Activated CD4-positive, alpha-beta T cell treated with anti-CD3 and anti-CD28 coated beads, Interleukin-2, amount 10 ng/mL, durations not matched to agents 7 days and 5 days (primary cell): ENCODE measurements at regions of chr14 and their contacts with region 1.

Region 1: GRCh38 chr14:22570132-22570949 is 18.7 kb downstream of the DAD1 start:
- DNase-seq: peak; percentile 94
- H3K4me3 Mint-ChIP-seq: peak overlapping the region; percentile 78
- H3K27ac Mint-ChIP-seq: peak overlapping the region; percentile 97
- H3K4me1 Mint-ChIP-seq: peaks cover 68% of the 10 kb centered on the region
- H3K27me3 Mint-ChIP-seq: no peaks in the 10 kb centered on the region

Region 2: GRCh38 chr14:21860172-21860571 is 710.2 kb before region 1 on chr14:
- CTCF ChIA-PET with region 1: interaction called, 10 read pairs
- POLR2A ChIA-PET with region 1: no interaction called
- DNase-seq: peak; percentile 63
- H3K4me3 Mint-ChIP-seq: peak overlapping the region; percentile 36
- H3K27ac Mint-ChIP-seq: peak overlapping the region; percentile 52
- H3K4me1 Mint-ChIP-seq: peaks cover 7% of the 10 kb centered on the region
- H3K27me3 Mint-ChIP-seq: peaks cover 23% of the 10 kb centered on the region

Region 3: DNA sequence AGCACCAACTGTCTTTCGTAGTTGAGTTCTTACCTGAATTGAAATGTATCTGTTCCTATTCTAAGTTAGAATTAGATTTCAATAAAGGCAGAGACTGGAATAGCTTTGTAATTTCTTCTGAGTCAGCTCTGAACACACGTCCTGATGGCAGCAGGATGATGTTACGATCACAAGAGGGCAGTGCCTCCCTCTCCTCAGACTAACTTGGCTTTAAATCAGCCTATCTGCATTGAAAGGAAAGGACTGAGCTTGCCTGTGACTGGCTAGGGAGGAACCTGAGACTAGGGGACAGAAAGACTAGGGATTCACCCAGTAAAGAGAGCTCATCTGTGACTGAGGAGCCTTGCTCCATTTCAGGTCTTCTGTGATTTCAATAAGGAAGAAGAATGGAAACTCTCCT is 573.0 kb before region 1 on chr14:
- CTCF ChIA-PET with region 1: interaction called, 14 read pairs
- POLR2A ChIA-PET with region 1: no interaction called
- DNase-seq: peak; percentile 58
- H3K4me3 Mint-ChIP-seq: peak overlapping the region; percentile 83
- H3K27ac Mint-ChIP-seq: peak overlapping the region; percentile 91
- H3K4me1 Mint-ChIP-seq: peaks cover 34% of the 10 kb centered on the region
- H3K27me3 Mint-ChIP-seq: no peaks in the 10 kb centered on the region

Region 4: DNA sequence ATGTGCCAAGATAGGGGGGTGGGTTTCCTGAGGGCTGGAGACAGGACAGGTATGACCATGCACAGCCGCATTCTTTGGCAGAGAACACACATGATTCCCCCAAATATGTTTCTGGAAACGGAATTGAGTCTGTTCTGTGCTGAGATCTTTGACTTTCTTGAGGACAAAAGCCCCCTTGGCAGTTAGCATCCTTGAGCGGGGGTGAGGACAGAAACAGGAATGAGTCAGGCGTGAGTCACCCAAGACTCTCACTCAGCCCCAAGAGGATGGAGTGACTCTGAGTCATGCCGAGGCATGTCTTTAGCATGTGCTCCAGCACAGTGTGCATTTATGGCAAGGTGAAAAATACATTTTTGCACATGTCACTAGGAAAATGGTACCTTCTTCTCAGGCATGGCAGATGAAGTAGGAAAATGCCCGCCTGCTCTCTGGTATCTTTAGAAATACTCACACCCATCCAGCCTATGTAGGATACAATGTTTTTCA is 33.4 kb before region 1 on chr14:
- CTCF ChIA-PET with region 1: interaction called, 55 read pairs
- POLR2A ChIA-PET with region 1: no interaction called
- DNase-seq: peak; percentile 80
- H3K4me3 Mint-ChIP-seq: peak overlapping the region; percentile 77
- H3K27ac Mint-ChIP-seq: peak overlapping the region; percentile 91
- H3K4me1 Mint-ChIP-seq: peaks cover 95% of the 10 kb centered on the region
- H3K27me3 Mint-ChIP-seq: no peaks in the 10 kb centered on the region

Region 5: DNA sequence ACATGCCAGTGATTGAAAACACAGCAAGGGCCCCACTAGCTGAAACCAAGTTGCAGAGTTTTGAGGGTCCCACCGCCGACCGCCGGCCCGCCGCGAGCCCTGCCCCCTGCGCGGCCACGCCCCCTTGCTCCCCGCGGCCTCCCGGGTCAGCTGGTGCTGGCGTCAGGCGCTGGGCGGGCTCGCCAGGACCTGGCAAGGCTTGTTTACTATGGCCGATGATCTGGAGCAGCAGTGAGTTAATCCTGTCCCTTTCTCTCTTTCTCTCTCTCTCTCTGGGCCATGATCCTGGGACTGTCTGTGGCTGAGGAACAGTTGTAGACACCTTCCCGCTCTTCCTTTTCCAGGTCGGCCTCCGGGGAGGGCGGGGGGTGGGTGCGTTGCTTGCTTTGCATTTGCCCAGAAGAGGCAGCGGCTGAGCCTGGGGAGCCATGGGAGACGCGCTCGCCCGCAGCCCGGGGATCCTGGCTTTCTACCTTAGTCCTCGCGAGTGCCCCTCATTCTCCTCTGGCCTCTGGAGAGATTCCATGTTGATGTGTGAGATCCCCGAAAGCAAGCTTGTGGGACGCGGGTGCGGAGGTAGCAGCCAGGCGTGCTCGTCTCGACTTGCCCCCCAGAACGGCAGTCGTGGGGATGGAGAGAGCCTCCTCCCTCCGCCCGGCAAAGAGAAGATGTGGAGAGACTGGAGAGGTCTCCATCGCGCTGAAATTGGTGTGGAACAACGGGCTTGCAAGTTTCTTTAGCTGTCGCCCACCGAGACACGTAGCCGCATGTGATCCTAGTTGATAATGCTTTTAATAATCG is 28.0 kb after region 1 on chr14 and contains the start of gene ABHD4:
- CTCF ChIA-PET with region 1: interaction called, 28 read pairs
- POLR2A ChIA-PET with region 1: no interaction called
- DNase-seq: peak; percentile 65
- H3K4me3 Mint-ChIP-seq: peak within 1 kb of the TSS; percentile 89
- H3K27ac Mint-ChIP-seq: peak within 1 kb of the TSS; percentile 86
- H3K4me1 Mint-ChIP-seq: peaks cover 39% of the 10 kb centered on the region
- H3K27me3 Mint-ChIP-seq: peaks cover 4% of the 10 kb centered on the region
- total RNA-seq, gene ABHD4: 8.3 to 10.4 TPM

Region 6: DNA sequence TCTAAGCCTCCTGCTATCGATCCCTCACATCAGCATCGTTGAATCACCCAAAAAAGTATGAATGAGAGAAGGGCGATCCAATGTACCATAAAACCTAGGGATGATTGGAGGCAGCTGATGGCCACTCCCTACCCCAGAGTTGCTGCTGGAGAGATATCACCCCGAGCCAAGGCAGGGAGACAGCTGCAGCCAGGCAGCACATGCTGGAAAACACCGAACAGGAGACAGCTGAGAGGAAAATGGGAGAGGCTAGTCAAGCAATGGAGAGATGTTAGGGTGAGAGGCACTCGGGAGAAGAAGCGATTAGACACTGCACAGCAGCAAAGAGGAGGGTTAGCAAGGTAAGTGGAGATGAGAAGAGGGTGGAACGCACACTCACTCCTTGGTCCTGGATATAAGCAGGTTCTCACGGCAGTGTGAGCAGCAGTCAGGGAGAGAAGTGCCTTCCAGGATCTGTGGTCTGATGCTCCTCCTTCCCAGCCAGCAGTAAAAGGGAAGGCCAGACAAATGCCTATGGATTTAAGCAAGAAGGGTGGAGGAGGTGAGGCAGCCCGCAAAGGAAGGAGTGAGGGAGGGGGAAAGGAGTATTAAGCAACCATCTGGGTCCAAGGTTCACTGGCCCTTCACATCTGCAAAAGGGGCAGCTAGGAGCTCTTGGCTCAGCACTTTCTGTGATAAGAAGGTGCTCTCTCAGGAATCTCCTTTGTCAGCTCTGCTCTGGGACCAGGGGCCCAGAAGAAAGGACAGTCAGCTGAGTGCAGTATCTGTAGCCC is 244.8 kb after region 1 on chr14 and contains the start of gene SLC7A7:
- CTCF ChIA-PET with region 1: interaction called, 11 read pairs
- POLR2A ChIA-PET with region 1: no interaction called
- DNase-seq: no peak
- H3K4me3 Mint-ChIP-seq: no peak within 1 kb of the TSS
- H3K27ac Mint-ChIP-seq: no peak within 1 kb of the TSS
- H3K4me1 Mint-ChIP-seq: peaks cover 31% of the 10 kb centered on the region
- H3K27me3 Mint-ChIP-seq: no peaks in the 10 kb centered on the region
- total RNA-seq, gene SLC7A7: 0.25 to 0.69 TPM

Region 7: DNA sequence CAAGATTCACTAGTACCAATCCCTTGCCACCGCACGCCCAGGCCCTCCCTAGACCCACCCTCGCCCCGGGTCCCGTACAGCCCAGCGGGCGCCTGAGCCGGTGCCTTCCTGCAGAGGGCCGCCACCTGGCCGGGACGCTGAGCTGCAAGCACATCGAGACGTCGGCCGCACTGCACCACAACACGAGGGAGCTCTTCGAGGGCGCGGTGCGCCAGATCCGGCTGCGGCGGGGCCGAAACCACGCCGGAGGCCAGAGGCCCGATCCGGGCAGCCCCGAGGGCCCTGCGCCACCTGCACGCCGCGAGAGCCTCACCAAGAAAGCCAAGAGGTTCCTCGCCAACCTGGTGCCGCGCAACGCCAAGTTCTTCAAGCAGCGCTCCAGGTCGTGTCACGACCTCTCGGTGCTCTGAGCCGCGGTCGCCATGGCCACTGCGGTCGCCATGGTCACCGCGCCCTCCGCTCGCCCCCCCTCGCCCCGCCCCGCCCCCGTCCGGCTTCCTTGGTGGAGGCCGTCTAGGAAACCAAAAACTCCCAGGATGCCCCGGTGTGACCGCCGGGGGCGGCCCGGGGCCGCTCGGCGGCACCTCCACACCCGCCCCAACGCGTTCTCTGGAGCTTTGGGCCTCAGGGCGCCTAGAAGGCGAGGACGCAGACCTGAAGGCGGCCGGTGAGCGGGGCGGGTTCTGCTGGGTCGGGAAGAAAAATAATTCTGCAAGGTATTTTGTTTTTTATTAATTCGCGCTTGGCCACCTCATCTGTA is 316.3 kb after region 1 on chr14:
- CTCF ChIA-PET with region 1: interaction called, 10 read pairs
- POLR2A ChIA-PET with region 1: no interaction called
- DNase-seq: peak; percentile 72
- H3K4me3 Mint-ChIP-seq: peak overlapping the region; percentile 77
- H3K27ac Mint-ChIP-seq: peak overlapping the region; percentile 85
- H3K4me1 Mint-ChIP-seq: peaks cover 48% of the 10 kb centered on the region
- H3K27me3 Mint-ChIP-seq: peaks cover 19% of the 10 kb centered on the region